PC-9 (cell line): ENCODE measurements at regions of chr3 and their contacts with region 1.

Region 1: DNA sequence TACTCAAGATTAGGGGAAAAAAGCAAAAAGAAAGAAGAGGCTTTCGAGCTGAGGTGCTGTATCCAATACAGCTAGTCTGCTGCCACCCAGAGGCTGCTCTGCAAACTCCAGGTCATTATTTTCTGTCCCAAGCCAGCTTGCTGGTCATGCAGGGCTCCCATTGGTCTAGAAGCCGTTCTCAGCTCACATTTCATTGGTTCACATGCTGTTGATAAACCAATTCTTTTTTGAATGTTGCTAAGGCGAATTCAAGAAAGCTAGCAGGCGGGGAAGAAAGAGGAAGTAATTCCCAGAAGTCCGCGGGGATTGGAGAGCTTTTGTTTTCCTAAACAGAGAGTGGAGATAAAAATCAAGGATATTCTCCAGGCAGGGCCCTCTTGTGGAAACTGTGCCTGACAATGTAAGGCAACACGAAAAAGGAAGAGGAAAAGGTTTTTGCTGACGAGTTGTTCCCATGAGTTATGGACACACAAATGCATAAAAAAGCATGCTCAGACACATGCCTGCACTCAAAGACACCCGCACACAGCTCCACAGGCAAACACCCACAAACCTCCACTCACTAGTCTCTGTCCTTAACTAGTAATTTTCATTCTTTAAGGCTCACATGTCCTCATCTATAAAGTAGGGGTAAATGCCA is 33.4 kb downstream of the FSTL1 start:
- DNase-seq: peak; percentile 91 to 92
- H3K4me3 ChIP-seq: peak overlapping the region; percentile 34; the same call in 1 of the 2 replicates
- H3K27ac ChIP-seq: peak overlapping the region; percentile 32; the same call in 1 of the 2 replicates
- H3K4me1 ChIP-seq: peaks cover 11% of the 10 kb centered on the region
- H3K27me3 ChIP-seq: no peaks in the 10 kb centered on the region
- CTCF ChIP-seq: peak; percentile 85

Region 2: GRCh38 chr3:119891944-119892721 is 525.3 kb before region 1 on chr3:
- CTCF ChIA-PET with region 1: no interaction called
- POLR2A ChIA-PET with region 1: no interaction called
- intact Hi-C with region 1: loop called (anchors 2 kb)
- DNase-seq: peak in 1 of 2 experiments; percentile 10
- H3K4me3 ChIP-seq: no peak overlapping the region
- H3K27ac ChIP-seq: no peak overlapping the region
- H3K4me1 ChIP-seq: no peaks in the 10 kb centered on the region
- H3K27me3 ChIP-seq: no peaks in the 10 kb centered on the region
- CTCF ChIP-seq: peak; percentile 70

Region 3: GRCh38 chr3:120438665-120439370 is 21.4 kb after region 1 on chr3:
- CTCF ChIA-PET with region 1: interaction called, 14 read pairs
- POLR2A ChIA-PET with region 1: no interaction called
- intact Hi-C with region 1: loop called (anchors 1 kb)
- DNase-seq: no peak
- H3K4me3 ChIP-seq: no peak overlapping the region
- H3K27ac ChIP-seq: no peak overlapping the region
- H3K4me1 ChIP-seq: peaks cover 30% of the 10 kb centered on the region
- H3K27me3 ChIP-seq: no peaks in the 10 kb centered on the region
- CTCF ChIP-seq: no peak

Region 4: GRCh38 chr3:120469447-120469846 is 52.1 kb after region 1 on chr3:
- CTCF ChIA-PET with region 1: interaction called, 4 read pairs
- POLR2A ChIA-PET with region 1: no interaction called
- intact Hi-C with region 1: loop called (anchors 1 kb)
- DNase-seq: peak; percentile 80 to 95
- H3K4me3 ChIP-seq: peak overlapping the region; percentile 36; the same call in 1 of the 2 replicates
- H3K27ac ChIP-seq: peak overlapping the region; percentile 99
- H3K4me1 ChIP-seq: peaks cover 50% of the 10 kb centered on the region
- H3K27me3 ChIP-seq: no peaks in the 10 kb centered on the region
- CTCF ChIP-seq: no peak

Region 5: GRCh38 chr3:120795017-120795648 is 377.7 kb after region 1 on chr3:
- CTCF ChIA-PET with region 1: interaction called, 8 read pairs
- POLR2A ChIA-PET with region 1: no interaction called
- intact Hi-C with region 1: loop called (anchors 2 kb)
- DNase-seq: peak in 1 of 2 experiments; percentile 66
- H3K4me3 ChIP-seq: no peak overlapping the region
- H3K27ac ChIP-seq: no peak overlapping the region
- H3K4me1 ChIP-seq: no peaks in the 10 kb centered on the region
- H3K27me3 ChIP-seq: no peaks in the 10 kb centered on the region
- CTCF ChIP-seq: peak; percentile 90